Body of pancreas (tissue), 4 donors: ENCODE measurements at regions of chr6 and their contacts with region 1.

Region 1: DNA sequence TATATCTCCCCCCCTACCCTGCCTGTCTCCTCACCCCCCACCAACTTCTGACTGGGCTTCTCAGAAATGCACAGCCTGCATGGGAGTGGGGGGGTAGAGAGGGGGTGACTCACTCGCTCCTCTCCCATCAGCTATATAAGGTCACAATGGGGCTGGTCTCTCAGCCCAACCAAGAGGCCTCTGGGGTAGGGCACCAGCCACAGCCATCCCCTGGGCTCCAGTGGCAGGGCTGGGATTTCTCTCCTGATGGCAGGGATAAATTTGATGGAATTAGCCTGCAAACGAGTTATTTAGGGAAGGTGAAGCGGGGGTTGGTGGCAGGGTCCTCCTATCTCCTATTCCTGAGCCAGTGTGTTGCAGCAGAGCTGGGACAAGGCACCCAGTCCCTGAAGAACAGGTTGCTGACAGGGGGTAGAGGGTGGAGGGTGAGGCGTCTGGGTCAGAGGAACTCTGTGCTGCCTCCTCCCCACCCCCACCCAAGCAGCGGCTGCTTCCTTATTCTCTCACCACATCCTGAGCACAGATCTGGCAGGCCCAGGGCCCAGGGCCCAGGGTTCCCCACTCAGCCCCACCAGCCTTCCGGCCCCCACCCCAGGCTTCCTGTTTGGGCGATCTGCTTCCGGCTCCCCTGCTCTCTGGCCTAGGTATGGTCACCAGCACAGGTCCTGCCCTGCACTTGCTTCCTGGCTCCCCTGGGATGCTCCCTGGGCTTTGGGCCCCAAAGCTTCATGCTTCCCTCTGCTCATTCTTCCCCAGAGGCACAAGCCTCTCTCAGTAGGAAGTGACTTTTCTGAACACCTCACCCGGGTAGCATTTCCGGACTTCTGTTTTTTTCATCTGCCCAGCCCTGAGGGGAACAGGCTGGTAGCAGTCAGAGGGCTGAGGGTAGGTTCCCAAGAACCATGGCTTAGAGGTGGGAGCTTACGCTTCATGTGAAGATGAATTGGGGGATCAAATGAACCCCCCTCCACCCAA is 4.0 kb downstream of the PPP1R18 start:
- DNase-seq: peak; percentile 47 to 80 (median 59)
- ATAC-seq: peak; percentile 7
- H3K4me3 ChIP-seq: no peak overlapping the region
- H3K27ac ChIP-seq: peak overlapping the region; percentile 9 to 98 (median 80)
- H3K4me1 ChIP-seq: peaks cover 59% of the 10 kb centered on the region
- H3K27me3 ChIP-seq: no peaks in the 10 kb centered on the region
- CTCF ChIP-seq: no peak
- POLR2A ChIP-seq: peak in 2 of 3 donors; percentile 42 to 52

Region 2: DNA sequence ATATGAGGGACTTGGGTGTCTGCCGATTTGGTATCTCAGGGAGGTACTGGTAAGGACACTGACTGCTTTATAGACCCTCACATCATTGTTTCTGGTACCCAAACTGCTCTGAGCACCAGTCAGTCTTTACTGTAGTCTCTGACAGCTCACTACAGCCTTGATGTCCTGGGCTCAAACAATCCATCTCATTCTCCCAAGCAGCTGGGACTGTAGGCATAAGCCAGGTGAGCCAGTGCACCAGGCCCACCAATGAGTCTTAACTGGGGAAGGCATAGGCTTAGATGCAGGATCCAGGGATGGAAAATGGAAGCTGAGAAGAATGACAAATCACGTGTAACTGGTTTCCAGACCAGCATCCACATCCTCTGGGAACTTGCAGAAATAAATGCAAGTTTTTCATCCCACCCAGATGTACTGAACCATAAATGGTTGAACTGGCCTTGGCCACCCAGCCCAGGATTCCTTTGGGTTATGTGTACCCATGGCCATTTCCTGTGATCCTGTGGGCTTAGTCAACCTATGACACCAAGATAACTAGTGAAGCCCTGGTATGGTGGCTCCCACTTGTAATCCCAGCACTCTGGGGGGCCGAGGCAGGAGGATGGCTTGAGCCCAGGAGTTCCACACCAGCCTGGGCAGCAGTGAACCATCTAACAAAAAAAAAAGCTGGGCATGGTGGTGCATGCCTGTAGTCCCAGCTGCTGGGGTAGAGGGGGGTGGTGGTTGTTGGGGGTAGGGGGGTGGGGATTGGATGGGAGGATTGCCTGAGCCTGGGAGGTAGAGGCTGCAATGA is 43.5 kb after region 1 on chr6:
- intact Hi-C with region 1: loop called (anchors 5 kb)
- DNase-seq: no peak
- ATAC-seq: no peak
- H3K4me3 ChIP-seq: no peak overlapping the region
- H3K27ac ChIP-seq: no peak overlapping the region
- H3K4me1 ChIP-seq: peaks cover 42% of the 10 kb centered on the region
- H3K27me3 ChIP-seq: no peaks in the 10 kb centered on the region
- CTCF ChIP-seq: no peak
- POLR2A ChIP-seq: no peak

Region 3: DNA sequence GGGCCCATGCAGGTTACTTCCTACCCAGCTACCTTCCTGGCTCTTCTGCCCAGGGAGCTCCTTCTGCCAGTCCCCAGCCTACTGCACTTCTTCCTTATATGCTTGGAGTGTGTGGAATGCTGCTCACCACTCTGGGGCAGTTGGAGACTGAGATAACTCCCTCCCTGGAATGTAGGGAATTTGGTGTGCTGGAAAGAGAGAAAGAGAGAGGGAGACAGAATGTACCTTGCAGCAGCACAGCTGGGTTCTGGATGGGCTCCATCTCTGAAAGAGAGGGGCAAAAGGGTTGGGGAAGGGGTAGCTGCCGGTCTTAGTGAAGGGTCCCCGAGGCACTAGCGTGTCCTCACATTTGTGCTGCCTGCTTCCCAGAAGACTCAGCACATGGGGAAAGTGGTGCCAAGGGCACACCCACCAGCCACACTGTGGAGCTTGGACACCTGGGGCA is 161.7 kb after region 1 on chr6:
- intact Hi-C with region 1: no loop called
- DNase-seq: peak in 1 of 4 donors; percentile 28
- ATAC-seq: peak; percentile 58
- H3K4me3 ChIP-seq: no peak overlapping the region
- H3K27ac ChIP-seq: peak overlapping the region in 2 of 4 donors; percentile 32 to 44
- H3K4me1 ChIP-seq: peaks cover 32% of the 10 kb centered on the region
- H3K27me3 ChIP-seq: no peaks in the 10 kb centered on the region
- CTCF ChIP-seq: peak in 2 of 7 experiments; percentile 17 to 18
- POLR2A ChIP-seq: no peak